AG04450 (cell line): ENCODE measurements at regions of chr1 and their contacts with region 1.

Region 1: GRCh38 chr1:160997323-160998038 is 23.5 kb downstream of the F11R start:
- DNase-seq: no peak
- H3K4me3 ChIP-seq: no peak overlapping the region
- H3K27ac ChIP-seq: no peak overlapping the region
- H3K27me3 ChIP-seq: peaks cover 3% of the 10 kb centered on the region
- CTCF ChIP-seq: peak; percentile 82

Region 2: DNA sequence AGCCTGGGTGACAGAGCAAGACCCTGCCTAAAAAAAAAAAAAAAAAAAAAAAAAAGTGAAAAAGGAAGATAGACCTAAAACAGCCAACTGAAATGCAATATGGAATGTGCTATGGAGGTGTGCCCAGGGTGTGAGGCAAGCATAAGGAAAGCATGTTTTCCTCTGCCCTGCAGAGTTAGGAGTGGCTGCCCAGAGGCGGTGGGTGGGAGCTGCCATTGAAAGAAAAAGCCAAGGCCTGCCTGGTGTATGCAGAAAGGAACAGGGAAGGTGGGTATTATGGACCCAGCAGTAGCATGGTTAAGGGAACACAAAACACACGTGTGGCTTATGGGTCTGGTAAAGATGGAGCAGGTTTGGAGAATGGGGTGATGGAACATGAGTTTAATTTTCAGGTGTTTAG is 143.7 kb before region 1 on chr1:
- CTCF ChIA-PET with region 1: no interaction called
- POLR2A ChIA-PET with region 1: no interaction called
- DNase-seq: no peak
- H3K4me3 ChIP-seq: no peak overlapping the region
- H3K27ac ChIP-seq: no peak overlapping the region
- H3K27me3 ChIP-seq: no peaks in the 10 kb centered on the region
- CTCF ChIP-seq: no peak

Region 3: DNA sequence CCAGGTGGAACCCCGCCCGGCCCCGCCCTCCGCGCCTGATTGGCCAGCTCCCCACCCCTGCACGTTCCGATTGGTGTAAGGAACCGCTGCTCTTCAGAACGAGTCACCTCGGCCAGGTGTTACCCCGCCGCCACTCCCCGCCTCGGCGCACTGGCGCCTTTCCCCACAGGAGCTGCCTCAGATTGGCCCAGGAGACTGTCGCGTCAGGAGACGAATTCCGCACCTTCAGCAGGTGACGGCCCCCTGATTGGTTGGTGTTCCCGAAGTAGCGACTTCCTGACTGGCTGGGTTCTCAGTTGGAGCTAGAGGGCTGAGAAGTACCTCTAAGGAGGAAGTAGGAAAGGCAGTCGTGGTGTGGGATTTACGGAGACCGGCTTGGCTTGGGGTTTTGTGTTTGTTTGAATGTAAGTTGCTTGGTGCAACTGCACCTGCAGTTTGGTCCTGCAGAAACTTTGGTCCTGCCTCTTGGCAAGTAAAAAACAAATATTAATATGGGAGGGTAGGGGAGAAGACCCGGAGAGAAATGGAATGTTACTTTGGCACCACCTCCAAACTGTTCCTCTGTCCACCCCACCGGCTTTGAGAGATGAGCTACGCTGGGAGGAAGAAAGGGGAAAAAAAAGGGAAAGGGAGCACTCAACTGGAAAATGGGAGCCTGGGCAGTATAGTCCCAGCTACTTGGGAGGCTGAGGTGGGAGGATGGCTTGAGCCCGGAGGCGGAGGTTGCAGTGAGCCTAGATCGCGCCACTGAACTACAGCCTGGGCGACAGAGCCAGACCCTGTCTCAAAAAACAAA is 23.9 kb after region 1 on chr1:
- CTCF ChIA-PET with region 1: interaction called, 7 read pairs
- POLR2A ChIA-PET with region 1: interaction called, 11 read pairs
- DNase-seq: no peak
- H3K4me3 ChIP-seq: peak overlapping the region; percentile 58
- H3K27ac ChIP-seq: no peak overlapping the region
- H3K27me3 ChIP-seq: peaks cover 25% of the 10 kb centered on the region
- CTCF ChIP-seq: no peak

Region 4: DNA sequence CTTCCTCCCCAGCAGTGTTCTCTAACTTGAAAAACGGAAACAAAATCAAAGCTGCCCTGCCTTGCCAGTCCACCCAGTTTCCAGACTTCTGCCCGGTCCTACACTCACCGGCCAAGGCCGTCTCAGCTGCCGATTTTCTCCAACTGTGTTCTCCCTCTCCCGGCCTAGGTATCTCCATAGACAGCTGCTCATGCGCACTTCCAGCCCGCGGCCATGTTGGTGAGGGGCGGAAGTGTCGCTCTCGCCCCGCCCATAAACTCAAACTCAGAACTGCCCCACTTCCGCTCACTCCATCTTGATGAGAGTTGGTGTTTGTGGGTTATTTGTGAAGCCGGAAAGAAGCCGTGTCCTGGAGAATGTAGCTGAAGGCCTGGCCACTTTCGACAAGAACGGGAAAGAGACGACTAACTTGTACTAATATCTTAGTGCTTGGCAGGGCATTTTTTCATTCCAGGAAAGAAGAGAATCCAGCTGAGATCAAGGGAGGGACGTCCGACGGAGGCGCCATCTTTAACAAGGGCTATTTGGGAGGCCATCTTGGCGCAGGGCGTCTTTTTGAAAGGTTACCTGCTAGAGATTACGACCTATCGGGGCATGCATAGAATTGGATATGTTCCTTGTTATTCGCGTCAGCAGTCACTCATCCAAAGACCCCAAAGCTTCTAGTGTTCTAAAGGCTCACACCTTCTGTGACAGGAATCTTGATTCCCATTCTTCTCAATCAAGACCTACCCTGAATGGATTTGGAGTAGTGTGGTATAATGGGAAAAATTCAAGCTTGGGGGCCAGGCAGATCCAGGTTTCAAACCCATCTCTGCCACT is 48.5 kb after region 1 on chr1 and contains the start of gene USF1:
- CTCF ChIA-PET with region 1: interaction called, 10 read pairs
- POLR2A ChIA-PET with region 1: interaction called, 7 read pairs
- DNase-seq: peak; percentile 87
- H3K4me3 ChIP-seq: peak within 1 kb of the TSS; percentile 86
- H3K27ac ChIP-seq: peak within 1 kb of the TSS; percentile 95
- H3K27me3 ChIP-seq: no peaks in the 10 kb centered on the region
- CTCF ChIP-seq: no peak
- polyA plus RNA-seq, gene USF1: 32.6 and 37.6 TPM in 2 replicates

Region 5: DNA sequence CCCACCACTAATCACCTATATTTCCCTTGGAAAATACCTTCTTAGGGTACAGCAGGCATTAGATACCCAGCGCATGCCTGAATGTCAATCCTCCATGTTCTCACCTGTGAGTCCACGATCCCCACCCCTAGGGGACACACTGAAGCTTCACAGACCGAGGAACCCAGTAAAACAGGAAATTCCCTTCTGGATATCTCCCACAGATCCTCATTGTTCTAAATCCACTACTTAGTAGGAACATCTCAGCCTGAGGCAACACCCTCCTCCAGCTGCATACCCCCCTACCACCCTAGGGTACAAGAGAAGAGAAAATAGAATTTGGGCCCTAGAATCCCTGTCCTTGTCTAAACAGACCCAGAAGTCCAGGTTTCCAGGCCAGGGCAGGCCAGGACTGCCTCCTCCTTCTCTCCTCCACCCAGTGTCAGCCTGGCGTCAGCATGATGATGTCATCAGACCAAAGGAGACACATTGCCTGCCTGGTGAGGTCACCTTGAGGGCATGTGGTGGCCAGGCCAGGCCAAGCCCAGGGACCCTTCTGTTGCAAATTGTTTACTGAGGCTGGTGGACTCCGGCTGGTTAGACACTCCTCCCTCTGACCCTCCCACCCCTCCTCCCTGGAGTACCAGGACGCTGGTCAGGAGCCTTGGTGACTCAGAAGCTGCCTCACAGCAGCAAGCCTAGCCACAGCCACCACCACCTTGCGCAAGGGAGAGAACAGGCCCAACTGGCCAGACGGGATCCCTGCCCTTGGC is 85.7 kb after region 1 on chr1:
- CTCF ChIA-PET with region 1: interaction called, 12 read pairs
- POLR2A ChIA-PET with region 1: interaction called, 5 read pairs
- DNase-seq: peak; percentile 51
- H3K4me3 ChIP-seq: no peak overlapping the region
- H3K27ac ChIP-seq: peak overlapping the region; percentile 70
- H3K27me3 ChIP-seq: no peaks in the 10 kb centered on the region
- CTCF ChIP-seq: no peak

Region 6: GRCh38 chr1:161139765-161140164 is 142.3 kb after region 1 on chr1:
- CTCF ChIA-PET with region 1: interaction called, 87 read pairs
- POLR2A ChIA-PET with region 1: no interaction called
- DNase-seq: no peak
- H3K4me3 ChIP-seq: no peak overlapping the region
- H3K27ac ChIP-seq: no peak overlapping the region
- H3K27me3 ChIP-seq: no peaks in the 10 kb centered on the region
- CTCF ChIP-seq: peak; percentile 66